Common myeloid progenitor, CD34-positive (primary cell): ENCODE measurements at regions of chr6 and their contacts with region 1.

Region 1: GRCh38 chr6:54717849-54718455 is 128.6 kb upstream of the FAM83B start:
- DNase-seq: peak; percentile 52 to 63 (median 54)
- H3K4me3 ChIP-seq: no peak overlapping the region
- H3K27ac ChIP-seq: no peak overlapping the region
- H3K4me1 ChIP-seq: no peaks in the 10 kb centered on the region
- H3K27me3 ChIP-seq: no peaks in the 10 kb centered on the region

Region 2: DNA sequence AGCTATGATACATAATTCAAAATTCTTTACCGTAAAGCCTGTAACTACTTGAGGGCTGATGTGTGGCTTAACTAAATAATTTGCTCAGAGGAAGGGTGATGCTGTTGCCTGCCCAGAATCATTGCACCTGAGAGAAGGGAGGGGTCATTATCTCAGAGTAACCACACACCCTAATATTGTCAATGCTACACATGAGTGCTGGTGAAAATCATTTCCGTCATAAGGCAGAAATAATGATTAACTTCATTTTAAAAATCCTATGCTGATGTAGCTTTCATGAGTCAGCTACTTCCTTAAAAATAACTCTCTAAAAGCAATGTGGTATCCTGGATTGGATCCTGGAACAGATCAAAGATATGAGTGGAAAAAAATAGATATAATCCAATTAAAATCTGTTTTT is 17.8 kb before region 1 on chr6:
- CTCF ChIA-PET with region 1: interaction called, 16 read pairs
- POLR2A ChIA-PET with region 1: no interaction called
- DNase-seq: no peak
- H3K4me3 ChIP-seq: no peak overlapping the region
- H3K27ac ChIP-seq: no peak overlapping the region
- H3K4me1 ChIP-seq: no peaks in the 10 kb centered on the region
- H3K27me3 ChIP-seq: no peaks in the 10 kb centered on the region